ENCODE measurements at regions of chr11 and their contacts with region 1.

Region 1: DNA sequence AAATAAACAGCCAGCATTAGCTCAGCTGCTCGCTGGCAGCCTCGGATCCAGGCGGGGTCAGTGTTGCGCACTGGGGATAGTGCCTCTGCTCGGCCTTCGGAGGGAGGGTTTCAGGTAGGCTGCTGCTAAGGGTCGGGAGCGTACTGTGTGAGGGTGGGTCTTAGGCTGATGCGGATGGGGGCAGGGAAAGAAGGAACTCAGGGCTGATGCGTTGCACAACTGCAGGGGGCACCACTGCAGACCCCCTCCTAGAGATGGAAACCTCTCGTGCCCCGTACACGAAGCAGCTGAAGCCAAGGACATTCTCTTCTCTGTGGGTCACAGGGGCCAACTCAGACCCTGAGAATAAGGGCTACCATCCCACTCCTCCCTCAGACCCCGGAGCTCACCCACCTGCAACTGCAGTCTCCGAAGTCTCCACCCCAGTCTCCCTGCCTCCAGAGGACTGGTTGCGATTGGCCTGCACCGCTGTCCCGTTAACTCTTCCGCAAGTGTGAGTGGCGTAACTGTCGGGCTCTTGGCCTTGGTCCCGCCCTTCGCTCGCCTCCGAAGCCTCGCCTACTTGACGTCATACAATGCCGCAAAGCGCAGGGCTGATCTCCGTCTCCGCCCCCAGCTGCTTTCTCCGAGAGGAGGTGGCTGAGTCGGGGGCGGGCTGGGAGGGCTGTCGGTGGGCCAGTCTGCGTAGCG is at the start of gene KBTBD3:
- DNase-seq: peak; percentile 100
- ATAC-seq: peak; percentile 93
- H3K4me3 ChIP-seq: peak within 1 kb of the TSS; percentile 91
- H3K27ac ChIP-seq: peak within 1 kb of the TSS; percentile 65
- H3K4me1 ChIP-seq: peaks cover 20% of the 10 kb centered on the region
- H3K27me3 ChIP-seq: no peaks in the 10 kb centered on the region
- CTCF ChIP-seq: peak; percentile 74
- total RNA-seq, gene KBTBD3: 2.0 and 3.9 TPM in 2 replicates

Region 2: GRCh38 chr11:105870516-105871113 is 206.4 kb before region 1 on chr11:
- CTCF ChIA-PET with region 1: no interaction called
- POLR2A ChIA-PET with region 1: no interaction called
- intact Hi-C with region 1: loop called (anchors 5 kb)
- DNase-seq: peak; percentile 31
- ATAC-seq: peak; percentile 96
- H3K4me3 ChIP-seq: no peak overlapping the region
- H3K27ac ChIP-seq: no peak overlapping the region
- H3K4me1 ChIP-seq: no peaks in the 10 kb centered on the region
- H3K27me3 ChIP-seq: 0 out of 2 replicates have a peak, but pooled peaks cover 6% of the 10 kb centered on the region
- CTCF ChIP-seq: no peak

Region 3: GRCh38 chr11:105910095-105910715 is 166.9 kb before region 1 on chr11:
- CTCF ChIA-PET with region 1: no interaction called
- POLR2A ChIA-PET with region 1: no interaction called
- intact Hi-C with region 1: loop called (anchors 2 kb)
- DNase-seq: peak; percentile 91
- ATAC-seq: peak; percentile 99
- H3K4me3 ChIP-seq: no peak overlapping the region
- H3K27ac ChIP-seq: peak overlapping the region; percentile 10; the same call in 1 of the 2 replicates
- H3K4me1 ChIP-seq: peaks cover 17% of the 10 kb centered on the region
- H3K27me3 ChIP-seq: no peaks in the 10 kb centered on the region
- CTCF ChIP-seq: no peak

Region 4: DNA sequence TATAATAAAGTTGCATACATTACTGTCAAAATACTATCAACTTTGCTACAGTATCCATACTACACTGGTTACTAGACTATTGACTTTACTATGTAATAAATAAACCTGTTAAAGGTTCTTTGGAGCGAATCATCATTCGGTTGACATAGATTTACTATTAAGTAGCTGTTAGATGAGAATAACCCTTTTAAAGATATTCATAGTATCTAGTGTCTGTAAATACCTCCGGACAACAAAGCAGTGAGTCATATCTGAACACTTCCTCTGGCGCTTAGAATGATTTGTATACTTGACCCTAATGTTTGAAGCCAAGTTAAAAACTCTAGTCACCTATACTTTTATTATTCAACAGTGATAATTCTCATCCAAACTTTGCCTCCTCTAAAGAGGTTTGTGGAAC is 139.7 kb before region 1 on chr11:
- CTCF ChIA-PET with region 1: no interaction called
- POLR2A ChIA-PET with region 1: no interaction called
- intact Hi-C with region 1: loop called (anchors 1 kb)
- DNase-seq: peak; percentile 86
- ATAC-seq: peak; percentile 83
- H3K4me3 ChIP-seq: no peak overlapping the region
- H3K27ac ChIP-seq: peak overlapping the region; percentile 31
- H3K4me1 ChIP-seq: peaks cover 32% of the 10 kb centered on the region
- H3K27me3 ChIP-seq: no peaks in the 10 kb centered on the region
- CTCF ChIP-seq: no peak

Region 5: GRCh38 chr11:106021967-106022794 is 54.9 kb before region 1 on chr11 and contains the start of gene MSANTD4:
- CTCF ChIA-PET with region 1: no interaction called
- POLR2A ChIA-PET with region 1: no interaction called
- intact Hi-C with region 1: loop called (anchors 1 kb)
- DNase-seq: peak; percentile 100
- ATAC-seq: peak; percentile 97
- H3K4me3 ChIP-seq: peak within 1 kb of the TSS; percentile 91
- H3K27ac ChIP-seq: peak within 1 kb of the TSS; percentile 9; the same call in 1 of the 2 replicates
- H3K4me1 ChIP-seq: peaks cover 28% of the 10 kb centered on the region
- H3K27me3 ChIP-seq: no peaks in the 10 kb centered on the region
- CTCF ChIP-seq: no peak
- total RNA-seq, gene MSANTD4: 18.0 and 33.7 TPM in 2 replicates

Measured in PC-3 (cell line).